ENCODE measurements at regions of chr6 and their contacts with region 1.

Region 1: GRCh38 chr6:109095027-109095834 is at the start of gene CEP57L1:
- DNase-seq: peak; percentile 88 to 96 (median 94)
- H3K4me3 ChIP-seq: peak within 1 kb of the TSS; percentile 95
- H3K4me3 Mint-ChIP-seq: peak within 1 kb of the TSS; percentile 92 to 96 (median 93)
- H3K27ac ChIP-seq: peak within 1 kb of the TSS; percentile 98
- H3K27ac Mint-ChIP-seq: peak within 1 kb of the TSS; percentile 98 to 99 (median 99)
- H3K4me1 ChIP-seq: peaks cover 33% of the 10 kb centered on the region
- H3K4me1 Mint-ChIP-seq: peaks cover 49 to 58% (median 54%) of the 10 kb centered on the region in 3 donors
- H3K27me3 ChIP-seq: no peaks in the 10 kb centered on the region
- H3K27me3 Mint-ChIP-seq: no peaks in the 10 kb centered on the region
- total RNA-seq, gene CEP57L1: 18.6 to 19.1 TPM

Region 2: GRCh38 chr6:108558372-108559096 is 536.7 kb before region 1 on chr6:
- CTCF ChIA-PET with region 1: interaction called, 10 read pairs
- POLR2A ChIA-PET with region 1: interaction called, 48 read pairs
- DNase-seq: peak; percentile 95 to 99 (median 97)
- H3K4me3 ChIP-seq: peak overlapping the region; percentile 80
- H3K4me3 Mint-ChIP-seq: peak overlapping the region; percentile 96 to 100 (median 98)
- H3K27ac ChIP-seq: peak overlapping the region; percentile 99
- H3K27ac Mint-ChIP-seq: peak overlapping the region; percentile 98 to 100 (median 99)
- H3K4me1 ChIP-seq: peaks cover 26% of the 10 kb centered on the region
- H3K4me1 Mint-ChIP-seq: peaks cover 21 to 27% (median 21%) of the 10 kb centered on the region in 3 donors
- H3K27me3 ChIP-seq: no peaks in the 10 kb centered on the region
- H3K27me3 Mint-ChIP-seq: peaks cover 2 to 8% of the 10 kb centered on the region in 2 donors

Region 3: DNA sequence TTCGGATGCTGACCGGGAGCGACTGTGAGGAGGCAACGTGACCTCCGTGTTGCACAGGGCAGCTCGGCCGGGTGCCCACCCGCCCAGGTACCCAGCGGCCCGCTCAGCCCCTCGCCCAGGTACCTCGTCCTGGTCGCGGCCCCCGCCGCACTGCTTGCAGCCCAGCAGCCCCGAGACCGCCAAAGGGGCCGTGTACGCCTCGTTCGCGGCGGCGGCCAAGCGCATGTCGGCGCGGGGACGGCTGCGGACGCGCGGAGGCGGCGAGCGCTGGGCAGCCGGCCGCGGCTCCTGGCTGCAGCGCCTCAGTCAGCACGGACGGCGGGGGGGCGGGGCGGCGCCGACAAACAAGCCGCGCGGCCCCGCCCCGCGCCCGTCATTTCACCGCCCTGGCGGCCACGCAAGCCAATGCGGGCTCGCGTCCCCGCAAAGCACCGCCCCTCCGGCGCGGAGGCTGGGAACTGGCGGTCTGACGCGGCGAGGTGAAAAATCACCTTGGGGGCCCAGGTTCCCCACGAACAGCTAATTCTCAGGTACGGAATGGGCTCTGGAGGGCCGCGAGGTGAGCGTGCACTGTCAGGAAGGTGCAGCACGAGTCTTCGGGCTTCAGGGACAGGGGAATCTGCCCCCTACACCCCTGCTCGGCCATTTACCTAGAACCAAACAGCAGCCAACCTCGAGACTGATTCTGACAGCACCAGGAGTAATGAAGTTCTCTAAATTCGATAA is 85.8 kb before region 1 on chr6:
- CTCF ChIA-PET with region 1: interaction called, 6 read pairs
- POLR2A ChIA-PET with region 1: interaction called, 11 read pairs
- DNase-seq: peak; percentile 89 to 94 (median 91)
- H3K4me3 ChIP-seq: peak overlapping the region; percentile 91
- H3K4me3 Mint-ChIP-seq: peak overlapping the region; percentile 97 to 99 (median 99)
- H3K27ac ChIP-seq: peak overlapping the region; percentile 96
- H3K27ac Mint-ChIP-seq: peak overlapping the region; percentile 96 to 100 (median 100)
- H3K4me1 ChIP-seq: peaks cover 47% of the 10 kb centered on the region
- H3K4me1 Mint-ChIP-seq: peaks cover 57 to 76% (median 73%) of the 10 kb centered on the region in 3 donors
- H3K27me3 ChIP-seq: no peaks in the 10 kb centered on the region
- H3K27me3 Mint-ChIP-seq: peaks cover 0 to 2% of the 10 kb centered on the region in 2 donors

Region 4: GRCh38 chr6:109117346-109118035 is 22.3 kb after region 1 on chr6:
- CTCF ChIA-PET with region 1: no interaction called
- POLR2A ChIA-PET with region 1: no interaction called
- DNase-seq: no peak
- H3K4me3 ChIP-seq: no peak overlapping the region
- H3K4me3 Mint-ChIP-seq: no peak overlapping the region
- H3K27ac ChIP-seq: no peak overlapping the region
- H3K27ac Mint-ChIP-seq: no peak overlapping the region
- H3K4me1 ChIP-seq: no peaks in the 10 kb centered on the region
- H3K4me1 Mint-ChIP-seq: peaks cover 10 to 18% (median 15%) of the 10 kb centered on the region in 3 donors
- H3K27me3 ChIP-seq: no peaks in the 10 kb centered on the region
- H3K27me3 Mint-ChIP-seq: peaks cover 0 to 4% of the 10 kb centered on the region in 2 donors

Region 5: GRCh38 chr6:109174911-109175310 is 79.7 kb after region 1 on chr6:
- CTCF ChIA-PET with region 1: no interaction called
- POLR2A ChIA-PET with region 1: no interaction called
- DNase-seq: no peak
- H3K4me3 ChIP-seq: no peak overlapping the region
- H3K4me3 Mint-ChIP-seq: no peak overlapping the region
- H3K27ac ChIP-seq: no peak overlapping the region
- H3K27ac Mint-ChIP-seq: no peak overlapping the region
- H3K4me1 ChIP-seq: no peaks in the 10 kb centered on the region
- H3K4me1 Mint-ChIP-seq: no peaks in the 10 kb centered on the region
- H3K27me3 ChIP-seq: no peaks in the 10 kb centered on the region
- H3K27me3 Mint-ChIP-seq: peaks cover 19 to 40% of the 10 kb centered on the region in 2 donors